Panc1 (cell line): ENCODE measurements at regions of chr5 and their contacts with region 1.

Region 1: GRCh38 chr5:17697669-17698068 is 63.4 kb downstream of the TAF11L14 start:
- DNase-seq: no peak
- ATAC-seq: no peak
- H3K4me3 ChIP-seq: no peak overlapping the region
- H3K27ac ChIP-seq: no peak overlapping the region
- H3K4me1 ChIP-seq: no peaks in the 10 kb centered on the region
- H3K27me3 ChIP-seq: no peaks in the 10 kb centered on the region
- CTCF ChIP-seq: no peak

Region 2: GRCh38 chr5:18023275-18023674 is 325.6 kb after region 1 on chr5:
- CTCF ChIA-PET with region 1: no interaction called
- POLR2A ChIA-PET with region 1: interaction called, 22 read pairs
- in situ Hi-C with region 1: no loop called
- intact Hi-C with region 1: no loop called
- DNase-seq: no peak
- ATAC-seq: no peak
- H3K4me3 ChIP-seq: no peak overlapping the region
- H3K27ac ChIP-seq: no peak overlapping the region
- H3K4me1 ChIP-seq: no peaks in the 10 kb centered on the region
- H3K27me3 ChIP-seq: no peaks in the 10 kb centered on the region
- CTCF ChIP-seq: no peak